ENCODE measurements at regions of chr20 and their contacts with region 1.

Region 1: DNA sequence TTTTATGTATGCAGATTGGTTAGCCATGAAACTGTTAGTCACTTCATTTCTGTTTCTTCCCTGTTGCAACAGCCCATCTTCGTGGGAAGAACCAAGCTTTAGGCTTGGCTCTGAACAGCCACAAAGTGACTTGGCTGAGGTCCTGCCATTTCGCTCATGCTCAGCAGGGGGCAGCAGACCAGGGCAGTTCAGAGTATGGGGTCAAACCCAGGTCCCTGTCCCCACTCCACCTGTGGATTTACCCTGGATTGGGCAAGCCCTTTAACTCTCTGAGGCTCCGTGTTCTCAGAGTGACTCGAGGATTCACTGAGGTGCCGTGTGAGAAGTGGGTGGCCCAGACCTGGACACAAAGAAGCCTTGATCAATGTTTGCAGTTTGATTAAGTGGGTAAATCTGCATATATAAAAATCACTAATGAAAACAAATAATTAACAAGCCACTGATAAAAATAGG is 19.8 kb upstream of the MAP1LC3A start:
- DNase-seq: no peak
- H3K4me3 ChIP-seq: no peak overlapping the region
- H3K27ac ChIP-seq: no peak overlapping the region
- H3K4me1 ChIP-seq: no peaks in the 10 kb centered on the region
- H3K27me3 ChIP-seq: no peaks in the 10 kb centered on the region
- CTCF ChIP-seq: peak; percentile 22 to 45 (median 40)
- POLR2A ChIP-seq: no peak

Region 2: GRCh38 chr20:34704177-34705007 is 165.7 kb after region 1 on chr20 and contains the start of gene TP53INP2:
- intact Hi-C with region 1: loop called (anchors 10 kb)
- DNase-seq: peak in 1 of 2 donors; percentile 93
- H3K4me3 ChIP-seq: peak within 1 kb of the TSS; percentile 89 to 96
- H3K27ac ChIP-seq: peak within 1 kb of the TSS; percentile 99
- H3K4me1 ChIP-seq: peaks cover 24% of the 10 kb centered on the region
- H3K27me3 ChIP-seq: no peaks in the 10 kb centered on the region
- CTCF ChIP-seq: no peak
- POLR2A ChIP-seq: peak; percentile 22 to 39
- total RNA-seq, gene TP53INP2: 14.5 TPM

Measured in vagina (tissue), 2 donors.